ENCODE measurements at regions of chr19 and their contacts with region 1.

Region 1: DNA sequence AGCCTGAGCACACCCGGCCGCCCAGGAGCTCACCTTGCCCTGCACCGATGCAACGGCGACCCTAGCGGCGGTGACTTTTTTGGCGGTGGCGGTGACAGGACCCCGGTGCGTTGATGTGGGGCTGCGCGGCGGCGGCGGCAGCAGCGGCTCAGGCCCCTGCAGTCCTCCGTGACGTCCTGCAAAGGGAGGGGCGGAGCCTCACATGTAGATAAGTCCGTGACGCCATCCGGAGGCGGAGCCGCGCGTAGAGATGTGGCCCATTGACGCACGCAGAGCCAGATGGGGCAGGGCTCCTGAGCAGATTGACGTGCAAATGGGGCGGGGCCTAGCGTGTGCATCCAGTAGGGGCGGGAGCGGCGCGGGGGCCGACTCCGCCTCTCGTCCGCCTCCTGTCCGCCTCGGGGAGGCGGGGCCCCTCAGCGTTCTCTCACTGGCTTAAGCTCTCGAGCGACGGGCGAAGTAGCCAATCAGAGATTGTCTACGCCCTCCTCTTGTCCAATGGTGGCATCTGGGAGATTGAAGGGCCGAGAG is at the start of gene RAB3A:
- DNase-seq: peak; percentile 100
- H3K4me3 ChIP-seq: peak within 1 kb of the TSS; percentile 68 to 80
- H3K27ac ChIP-seq: peak within 1 kb of the TSS; percentile 95 to 96
- H3K4me1 ChIP-seq: peaks cover 5% of the 10 kb centered on the region
- H3K27me3 ChIP-seq: no peaks in the 10 kb centered on the region
- CTCF ChIP-seq: peak in 2 of 4 experiments; percentile 34 to 54
- POLR2A ChIP-seq: peak; percentile 76
- total RNA-seq, gene RAB3A: 2.5 to 6.0 TPM

Region 2: DNA sequence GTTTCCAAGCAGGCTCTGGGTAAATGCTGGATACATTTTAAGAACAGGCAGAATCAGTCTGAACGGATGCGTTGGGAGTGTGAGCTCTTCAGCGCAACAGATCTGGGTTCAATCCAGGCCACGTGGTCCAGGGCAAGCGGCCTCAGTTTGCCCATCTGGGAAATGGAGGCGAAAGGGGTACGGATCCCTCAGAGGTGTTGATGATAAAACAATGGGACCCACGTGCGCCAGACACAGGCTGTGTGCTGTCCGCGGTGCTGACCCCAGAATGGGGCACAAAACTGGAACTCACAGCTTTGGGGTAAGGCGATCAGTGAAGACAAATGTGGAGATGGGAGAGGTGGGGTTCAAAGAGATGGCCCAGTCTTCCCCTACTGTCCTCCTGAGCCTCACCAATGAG is 35.4 kb after region 1 on chr19:
- intact Hi-C with region 1: no loop called
- DNase-seq: no peak
- H3K4me3 ChIP-seq: no peak overlapping the region
- H3K27ac ChIP-seq: no peak overlapping the region
- H3K4me1 ChIP-seq: no peaks in the 10 kb centered on the region
- H3K27me3 ChIP-seq: peaks cover 3% of the 10 kb centered on the region
- CTCF ChIP-seq: no peak
- POLR2A ChIP-seq: no peak

Region 3: DNA sequence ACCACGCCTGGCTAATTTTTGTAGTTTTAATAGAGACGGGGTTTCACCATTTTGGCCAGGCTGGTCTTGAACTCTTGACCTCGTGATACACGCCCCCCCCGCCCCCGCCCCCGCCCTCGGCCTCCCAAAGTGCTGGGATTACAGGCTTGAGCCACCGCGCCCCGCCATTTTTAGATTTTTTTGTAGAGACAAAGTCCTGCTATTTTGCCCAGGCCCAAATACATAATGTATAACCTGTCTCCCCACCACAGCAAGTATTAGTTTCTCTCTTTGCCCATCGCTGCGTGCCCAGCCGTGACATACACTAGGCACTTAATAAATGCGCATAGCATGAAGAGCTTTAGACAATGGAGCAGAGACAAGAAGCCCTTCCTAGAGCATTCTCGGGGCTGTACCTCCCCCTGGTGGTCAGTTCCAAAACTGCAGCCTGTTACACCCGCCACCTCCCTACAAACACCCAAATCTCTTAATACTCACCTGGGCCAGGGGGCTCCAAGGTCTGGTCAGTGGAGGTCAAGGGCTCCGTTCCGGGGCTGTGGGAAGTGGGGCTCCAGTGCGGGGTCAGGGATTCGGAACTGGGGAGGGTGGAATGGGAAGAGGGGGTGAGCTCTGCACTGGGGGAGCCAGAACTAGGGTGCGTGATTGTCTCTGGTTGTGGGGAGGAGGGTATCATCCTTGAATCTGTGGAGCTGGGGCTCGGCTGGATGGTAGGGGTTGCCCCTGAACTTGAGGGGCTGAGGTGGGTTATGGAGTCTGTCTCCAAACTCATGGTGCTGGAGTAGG is 47.9 kb after region 1 on chr19:
- intact Hi-C with region 1: loop called (anchors 2 kb)
- DNase-seq: peak; percentile 57
- H3K4me3 ChIP-seq: no peak overlapping the region
- H3K27ac ChIP-seq: no peak overlapping the region
- H3K4me1 ChIP-seq: no peaks in the 10 kb centered on the region
- H3K27me3 ChIP-seq: no peaks in the 10 kb centered on the region
- CTCF ChIP-seq: peak; percentile 90 to 96 (median 95)
- POLR2A ChIP-seq: no peak

Region 4: GRCh38 chr19:18322759-18323460 is 119.0 kb after region 1 on chr19 and contains the start of gene LSM4:
- intact Hi-C with region 1: loop called (anchors 5 kb)
- DNase-seq: peak; percentile 98
- H3K4me3 ChIP-seq: peak within 1 kb of the TSS; percentile 54 to 71
- H3K27ac ChIP-seq: peak within 1 kb of the TSS; percentile 90
- H3K4me1 ChIP-seq: peaks cover 14% of the 10 kb centered on the region
- H3K27me3 ChIP-seq: no peaks in the 10 kb centered on the region
- CTCF ChIP-seq: peak in 2 of 4 experiments; percentile 32 to 39
- POLR2A ChIP-seq: peak; percentile 85
- total RNA-seq, gene LSM4: 157 to 215 TPM

Region 5: GRCh38 chr19:18419195-18419698 is 215.3 kb after region 1 on chr19 and contains the start of gene SSBP4:
- intact Hi-C with region 1: loop called (anchors 10 kb)
- DNase-seq: peak; percentile 54
- H3K4me3 ChIP-seq: peak within 1 kb of the TSS; percentile 59 to 75
- H3K27ac ChIP-seq: peak within 1 kb of the TSS; percentile 77 to 82
- H3K4me1 ChIP-seq: peaks cover 14% of the 10 kb centered on the region
- H3K27me3 ChIP-seq: no peaks in the 10 kb centered on the region
- CTCF ChIP-seq: peak in 3 of 4 experiments; percentile 21 to 67 (median 62)
- POLR2A ChIP-seq: no peak
- total RNA-seq, gene SSBP4: 71.5 to 120 TPM

Measured in prostate gland (tissue), 2 donors.